ENCODE measurements at regions of chr7 and their contacts with region 1.

Region 1: GRCh38 chr7:116211006-116211912 is 920 bp downstream of the TES start:
- DNase-seq: peak; percentile 93 to 95
- H3K4me3 ChIP-seq: peak overlapping the region; percentile 95
- H3K4me3 Mint-ChIP-seq: peak overlapping the region; percentile 97
- H3K27ac Mint-ChIP-seq: peak overlapping the region; percentile 99
- H3K4me1 ChIP-seq: peaks cover 17% of the 10 kb centered on the region
- H3K4me1 Mint-ChIP-seq: peaks cover 26% of the 10 kb centered on the region
- H3K27me3 ChIP-seq: no peaks in the 10 kb centered on the region
- H3K27me3 Mint-ChIP-seq: no peaks in the 10 kb centered on the region
- CTCF ChIP-seq: no peak

Region 2: DNA sequence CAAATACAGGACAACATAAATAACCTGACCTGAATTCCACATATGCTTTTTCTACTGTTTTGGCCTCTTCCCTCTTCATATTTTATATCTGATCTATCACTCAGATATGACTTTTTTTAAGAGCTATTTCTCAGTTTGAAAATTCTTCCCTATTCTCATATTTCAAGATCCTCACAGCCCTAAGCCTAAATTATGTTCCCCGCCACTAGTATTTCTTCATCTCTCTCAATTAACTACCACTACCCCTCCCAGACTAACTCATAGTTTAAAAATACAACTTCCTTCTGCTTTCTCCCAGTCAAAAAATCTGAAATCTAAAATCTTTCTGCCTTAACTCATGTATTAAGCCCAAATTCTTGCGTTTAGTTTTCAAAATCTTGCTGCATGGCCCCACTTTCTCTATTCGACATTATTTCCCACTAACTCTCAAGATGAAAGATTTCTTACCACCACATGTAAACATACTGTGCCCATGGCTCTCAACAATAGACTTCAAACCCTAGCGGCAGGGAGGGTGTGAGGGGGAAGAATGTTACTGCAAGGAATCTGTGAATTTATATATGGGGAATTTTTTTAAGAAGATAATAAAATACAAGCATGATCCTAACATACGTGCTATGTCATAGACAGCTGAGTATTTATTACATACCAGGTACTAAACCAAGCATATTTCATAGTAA is 245.3 kb before region 1 on chr7:
- CTCF ChIA-PET with region 1: no interaction called
- POLR2A ChIA-PET with region 1: interaction called, 3 read pairs
- intact Hi-C with region 1: loop called (anchors 2 kb)
- DNase-seq: peak in 1 of 2 experiments; percentile 16
- H3K4me3 ChIP-seq: peak overlapping the region; percentile 21
- H3K4me3 Mint-ChIP-seq: peak overlapping the region; percentile 66
- H3K27ac Mint-ChIP-seq: peak overlapping the region; percentile 68
- H3K4me1 ChIP-seq: peaks cover 66% of the 10 kb centered on the region
- H3K4me1 Mint-ChIP-seq: peaks cover 37% of the 10 kb centered on the region
- H3K27me3 ChIP-seq: no peaks in the 10 kb centered on the region
- H3K27me3 Mint-ChIP-seq: no peaks in the 10 kb centered on the region
- CTCF ChIP-seq: no peak

Region 3: GRCh38 chr7:115976652-115977051 is 234.6 kb before region 1 on chr7:
- CTCF ChIA-PET with region 1: no interaction called
- POLR2A ChIA-PET with region 1: no interaction called
- intact Hi-C with region 1: no loop called
- DNase-seq: no peak
- H3K4me3 ChIP-seq: no peak overlapping the region
- H3K4me3 Mint-ChIP-seq: no peak overlapping the region
- H3K27ac Mint-ChIP-seq: no peak overlapping the region
- H3K4me1 ChIP-seq: peaks cover 47% of the 10 kb centered on the region
- H3K4me1 Mint-ChIP-seq: peaks cover 24% of the 10 kb centered on the region
- H3K27me3 ChIP-seq: no peaks in the 10 kb centered on the region
- H3K27me3 Mint-ChIP-seq: no peaks in the 10 kb centered on the region
- CTCF ChIP-seq: no peak

Region 4: GRCh38 chr7:115996911-115997615 is 214.2 kb before region 1 on chr7:
- CTCF ChIA-PET with region 1: no interaction called
- POLR2A ChIA-PET with region 1: no interaction called
- intact Hi-C with region 1: no loop called
- DNase-seq: no peak
- H3K4me3 ChIP-seq: no peak overlapping the region
- H3K4me3 Mint-ChIP-seq: no peak overlapping the region
- H3K27ac Mint-ChIP-seq: no peak overlapping the region
- H3K4me1 ChIP-seq: no peaks in the 10 kb centered on the region
- H3K4me1 Mint-ChIP-seq: no peaks in the 10 kb centered on the region
- H3K27me3 ChIP-seq: no peaks in the 10 kb centered on the region
- H3K27me3 Mint-ChIP-seq: no peaks in the 10 kb centered on the region
- CTCF ChIP-seq: no peak

Region 5: GRCh38 chr7:116180302-116180701 is 31.0 kb before region 1 on chr7:
- CTCF ChIA-PET with region 1: interaction called, 16 read pairs
- POLR2A ChIA-PET with region 1: interaction called, 11 read pairs
- intact Hi-C with region 1: loop called (anchors 1 kb)
- DNase-seq: peak; percentile 47 to 58
- H3K4me3 ChIP-seq: no peak overlapping the region
- H3K4me3 Mint-ChIP-seq: no peak overlapping the region
- H3K27ac Mint-ChIP-seq: no peak overlapping the region
- H3K4me1 ChIP-seq: no peaks in the 10 kb centered on the region
- H3K4me1 Mint-ChIP-seq: no peaks in the 10 kb centered on the region
- H3K27me3 ChIP-seq: no peaks in the 10 kb centered on the region
- H3K27me3 Mint-ChIP-seq: no peaks in the 10 kb centered on the region
- CTCF ChIP-seq: peak; percentile 73 to 80

Region 6: DNA sequence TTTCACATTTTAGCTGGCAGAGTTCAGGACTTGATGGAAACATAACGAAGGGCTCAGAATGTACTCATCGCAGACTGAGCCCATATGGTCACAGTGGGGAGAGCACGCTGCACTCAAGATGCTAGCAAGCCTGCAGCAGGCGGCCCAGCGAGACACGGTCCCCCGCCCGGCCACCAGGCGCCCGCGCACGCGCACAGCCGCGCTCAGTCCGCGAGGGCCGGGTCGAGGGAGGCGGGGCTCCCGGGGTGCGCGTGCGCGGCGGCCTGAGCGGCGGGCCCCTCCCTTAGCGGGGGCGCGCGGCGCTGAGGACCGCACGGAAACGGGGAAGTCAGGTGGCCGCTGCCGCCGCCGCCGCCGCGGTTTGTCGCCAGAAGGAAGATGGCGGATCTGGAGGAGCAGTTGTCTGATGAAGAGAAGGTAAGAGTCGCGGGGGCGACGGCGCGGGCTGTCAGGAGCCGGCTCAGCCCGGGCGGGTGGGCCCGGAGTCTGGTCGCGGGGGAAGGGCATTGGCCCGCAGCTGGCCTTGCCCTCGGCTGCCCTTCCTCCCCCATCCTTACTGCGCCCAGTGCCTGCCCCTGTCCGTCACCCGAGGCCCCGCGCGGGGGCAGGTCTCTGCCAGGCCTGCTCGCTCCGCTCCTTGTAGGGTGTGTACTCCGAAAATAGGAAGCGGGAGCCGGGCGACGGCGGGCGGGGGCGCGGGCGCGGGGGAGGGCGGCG is 651.1 kb after region 1 on chr7 and contains the start of gene CAPZA2:
- CTCF ChIA-PET with region 1: no interaction called
- POLR2A ChIA-PET with region 1: no interaction called
- intact Hi-C with region 1: loop called (anchors 2 kb)
- DNase-seq: peak; percentile 91 to 97
- H3K4me3 ChIP-seq: peak within 1 kb of the TSS; percentile 99
- H3K4me3 Mint-ChIP-seq: peak within 1 kb of the TSS; percentile 95
- H3K27ac Mint-ChIP-seq: peak within 1 kb of the TSS; percentile 93
- H3K4me1 ChIP-seq: peaks cover 16% of the 10 kb centered on the region
- H3K4me1 Mint-ChIP-seq: peaks cover 12% of the 10 kb centered on the region
- H3K27me3 ChIP-seq: no peaks in the 10 kb centered on the region
- H3K27me3 Mint-ChIP-seq: no peaks in the 10 kb centered on the region
- CTCF ChIP-seq: peak; percentile 8 to 29
- total RNA-seq, gene CAPZA2: 271 and 281 TPM in 2 replicates

Measured in Caco-2 (cell line).